ENCODE measurements at regions of chr1 and their contacts with region 1.

Region 1: GRCh38 chr1:21573971-21574465 is 64.8 kb downstream of the ALPL start:
- DNase-seq: peak; percentile 46
- H3K4me3 ChIP-seq: no peak overlapping the region
- H3K27ac ChIP-seq: peak overlapping the region in 1 of 4 donors; percentile 38
- H3K4me1 ChIP-seq: peaks cover 0 to 12% (median 3%) of the 10 kb centered on the region in 4 donors
- H3K27me3 ChIP-seq: peaks cover 4% of the 10 kb centered on the region
- CTCF ChIP-seq: peak; percentile 22 to 53 (median 43)
- EP300 ChIP-seq: no peak
- POLR2A ChIP-seq: no peak

Region 2: GRCh38 chr1:23263380-23263887 is 1689.4 kb after region 1 on chr1:
- in situ Hi-C with region 1: no loop called
- intact Hi-C with region 1: loop called (anchors 5 kb)
- DNase-seq: no peak
- H3K4me3 ChIP-seq: no peak overlapping the region
- H3K27ac ChIP-seq: no peak overlapping the region
- H3K4me1 ChIP-seq: no peaks in the 10 kb centered on the region
- H3K27me3 ChIP-seq: no peaks in the 10 kb centered on the region
- CTCF ChIP-seq: no peak
- EP300 ChIP-seq: no peak
- POLR2A ChIP-seq: no peak